ENCODE measurements at regions of chr9 and their contacts with region 1.

Region 1: GRCh38 chr9:88173378-88173999 is 35.2 kb upstream of the SPATA31C2 start:
- DNase-seq: peak; percentile 70 to 75
- H3K4me3 ChIP-seq: no peak overlapping the region
- H3K27ac ChIP-seq: no peak overlapping the region
- H3K4me1 ChIP-seq: no peaks in the 10 kb centered on the region
- H3K27me3 ChIP-seq: no peaks in the 10 kb centered on the region
- CTCF ChIP-seq: peak; percentile 88

Region 2: DNA sequence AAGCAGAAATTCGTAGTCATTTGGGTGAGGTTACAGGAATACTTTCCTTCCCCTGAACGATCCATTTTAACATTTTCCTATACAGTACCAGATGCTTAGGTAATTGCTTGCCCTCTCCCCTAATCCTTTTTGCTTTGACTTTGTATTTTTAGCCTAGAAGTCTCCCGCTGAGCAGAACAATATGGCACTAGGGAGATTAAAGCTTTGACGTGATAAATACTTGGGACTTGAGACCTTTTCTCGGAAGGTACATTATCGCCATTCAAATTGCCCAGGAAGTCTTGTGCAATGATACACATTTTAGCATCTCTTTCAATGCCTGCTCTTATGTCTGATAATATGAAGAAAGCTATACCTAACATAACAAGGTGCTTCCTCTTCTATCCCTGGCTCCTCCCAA is 12.3 kb before region 1 on chr9:
- CTCF ChIA-PET with region 1: no interaction called
- POLR2A ChIA-PET with region 1: interaction called, 17 read pairs
- intact Hi-C with region 1: no loop called
- DNase-seq: no peak
- H3K4me3 ChIP-seq: no peak overlapping the region
- H3K27ac ChIP-seq: no peak overlapping the region
- H3K4me1 ChIP-seq: no peaks in the 10 kb centered on the region
- H3K27me3 ChIP-seq: no peaks in the 10 kb centered on the region
- CTCF ChIP-seq: no peak

Region 3: GRCh38 chr9:88342246-88342645 is 168.8 kb after region 1 on chr9:
- CTCF ChIA-PET with region 1: no interaction called
- POLR2A ChIA-PET with region 1: no interaction called
- intact Hi-C with region 1: loop called (anchors 1 kb)
- DNase-seq: no peak
- H3K4me3 ChIP-seq: no peak overlapping the region
- H3K27ac ChIP-seq: no peak overlapping the region
- H3K4me1 ChIP-seq: peaks cover 23% of the 10 kb centered on the region
- H3K27me3 ChIP-seq: no peaks in the 10 kb centered on the region
- CTCF ChIP-seq: no peak

Region 4: DNA sequence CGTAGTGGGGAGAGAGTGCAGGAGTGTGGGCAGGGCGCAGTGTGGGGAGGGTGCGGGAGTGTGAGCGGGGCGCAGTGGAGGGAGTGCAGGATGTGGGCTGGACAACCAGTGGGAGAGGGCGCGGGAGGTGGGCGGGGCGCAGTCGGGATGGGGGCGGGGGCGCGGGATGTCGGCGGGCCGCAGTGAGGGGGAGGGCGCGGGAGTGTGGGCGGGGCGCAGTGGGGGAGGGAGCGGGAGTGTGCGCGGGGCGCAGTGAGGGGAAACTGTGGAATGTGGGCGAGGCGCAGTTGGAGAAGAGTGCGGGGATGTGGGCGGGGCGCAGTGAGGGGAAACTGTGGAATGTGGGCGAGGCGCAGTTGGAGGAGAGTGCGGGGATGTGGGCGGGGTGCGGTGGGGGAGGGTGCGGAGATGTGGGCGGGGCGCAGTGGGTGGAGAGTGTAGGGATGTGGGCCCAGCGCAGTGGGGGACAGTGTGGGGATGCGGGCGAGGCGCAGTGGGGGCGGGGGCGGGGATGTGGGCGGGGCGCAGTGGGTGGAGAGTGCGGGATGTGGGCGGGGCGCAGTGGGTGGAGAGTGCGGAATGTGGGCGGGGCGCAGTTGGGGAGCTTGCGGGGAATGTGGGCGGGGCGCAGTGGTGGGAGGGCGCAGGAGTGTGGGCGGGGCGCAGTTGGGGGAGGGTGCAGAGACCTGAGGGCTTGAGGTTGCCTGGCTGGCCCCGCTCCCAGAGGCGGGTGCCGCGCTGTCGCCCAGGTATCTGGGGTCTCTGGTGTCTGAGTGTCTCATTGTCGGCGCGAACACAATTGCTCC is 361.2 kb after region 1 on chr9 and contains the start of gene NXNL2:
- CTCF ChIA-PET with region 1: no interaction called
- POLR2A ChIA-PET with region 1: interaction called, 11 read pairs
- intact Hi-C with region 1: loop called (anchors 5 kb)
- DNase-seq: peak; percentile 55 to 90
- H3K4me3 ChIP-seq: peak within 1 kb of the TSS; percentile 67
- H3K27ac ChIP-seq: peak within 1 kb of the TSS; percentile 65
- H3K4me1 ChIP-seq: peaks cover 33% of the 10 kb centered on the region
- H3K27me3 ChIP-seq: no peaks in the 10 kb centered on the region
- CTCF ChIP-seq: no peak
- total RNA-seq, gene NXNL2: 5.5 and 8.7 TPM in 2 replicates